ENCODE measurements at regions of chr3 and their contacts with region 1.

Region 1: DNA sequence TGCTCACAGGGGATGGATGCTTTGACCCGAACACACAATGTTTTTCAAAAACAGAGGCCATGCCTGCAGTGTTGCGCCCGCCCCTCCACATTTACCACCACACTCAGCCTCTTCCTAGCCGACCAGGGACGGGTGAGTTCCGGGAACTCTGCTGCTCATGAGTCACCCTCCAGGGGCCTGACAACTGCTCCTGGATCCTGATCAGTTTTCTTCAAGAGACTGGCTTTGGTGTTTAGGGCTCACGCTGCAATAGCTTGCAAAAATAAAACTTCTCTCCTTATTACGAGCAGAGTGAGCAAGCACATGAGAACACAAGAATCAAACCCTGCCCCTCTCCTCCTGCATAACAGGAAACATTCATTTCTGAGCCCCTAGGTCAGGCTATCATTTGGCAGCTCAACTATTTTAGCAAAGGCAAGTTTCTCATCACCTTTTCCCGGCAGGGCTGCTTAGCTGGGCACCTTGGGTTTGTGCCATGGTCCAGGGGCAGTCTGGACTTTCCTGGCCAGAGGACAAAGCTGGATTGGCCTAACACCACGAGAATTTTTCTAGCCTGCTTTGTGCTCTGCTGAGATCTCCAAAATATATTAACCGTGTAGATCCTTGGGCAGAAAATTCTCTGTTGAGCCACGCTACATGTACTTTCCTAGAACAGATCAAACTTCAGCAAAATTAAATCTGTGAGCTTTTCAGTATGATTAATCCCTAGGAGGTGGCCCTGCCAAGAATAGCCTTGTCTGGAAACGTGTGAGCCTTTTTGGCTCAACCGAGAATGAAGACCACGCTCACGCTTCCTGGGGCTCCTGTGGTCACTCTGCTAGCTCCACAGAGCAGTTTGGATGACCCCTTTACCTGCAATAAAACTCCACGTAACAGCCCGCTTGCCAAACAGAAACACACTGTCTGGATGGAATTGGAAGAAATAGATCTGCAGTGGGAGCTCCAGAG is 52.7 kb upstream of the SPATA12 start:
- DNase-seq: peak; percentile 24 to 65 (median 44)
- ATAC-seq: peak; percentile 78
- H3K4me3 ChIP-seq: no peak overlapping the region
- H3K4me1 ChIP-seq: no peaks in the 10 kb centered on the region
- CTCF ChIP-seq: no peak

Region 2: GRCh38 chr3:57078344-57078634 is 70.5 kb after region 1 on chr3:
- intact Hi-C with region 1: loop called in 1 of 2 experiments (anchors 5 kb)
- DNase-seq: peak; percentile 65 to 73 (median 71)
- ATAC-seq: peak; percentile 78
- H3K4me3 ChIP-seq: peak overlapping the region; percentile 44
- H3K4me1 ChIP-seq: peaks cover 4% of the 10 kb centered on the region
- CTCF ChIP-seq: no peak

Region 3: GRCh38 chr3:57130571-57131209 is 122.9 kb after region 1 on chr3:
- intact Hi-C with region 1: no loop called
- DNase-seq: no peak
- ATAC-seq: no peak
- H3K4me3 ChIP-seq: no peak overlapping the region
- H3K4me1 ChIP-seq: no peaks in the 10 kb centered on the region
- CTCF ChIP-seq: no peak

Measured in mucosa of descending colon (tissue), 3 donors.